AG04449 (cell line): ENCODE measurements at regions of chr10 and their contacts with region 1.

Region 1: DNA sequence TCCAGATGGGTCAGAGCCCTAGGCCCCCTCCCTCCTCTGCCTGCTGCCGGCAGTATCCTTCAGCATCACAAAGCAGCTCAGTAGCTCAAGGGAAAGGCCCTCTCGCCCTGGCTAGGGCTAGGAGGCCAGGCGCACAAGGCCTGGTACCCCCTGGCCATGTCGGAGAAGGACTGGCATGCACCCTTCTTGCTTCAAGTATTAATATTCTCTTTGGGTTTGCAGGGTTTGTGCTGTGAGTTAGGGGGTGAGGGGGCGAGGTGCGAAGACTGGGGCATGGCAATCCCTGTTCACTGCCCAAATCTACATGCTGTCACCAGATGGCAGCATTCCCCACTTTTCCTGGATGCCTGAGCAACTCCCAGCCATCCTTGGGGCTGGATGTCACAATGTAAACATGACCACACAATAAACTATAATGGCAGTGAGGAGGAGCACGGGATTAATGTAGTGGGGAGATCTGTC is 105.2 kb downstream of the NEURL1 start:
- DNase-seq: peak; percentile 28
- H3K4me3 ChIP-seq: no peak overlapping the region
- CTCF ChIP-seq: peak; percentile 75

Region 2: GRCh38 chr10:103576862-103577261 is 21.8 kb before region 1 on chr10:
- CTCF ChIA-PET with region 1: interaction called, 12 read pairs
- POLR2A ChIA-PET with region 1: no interaction called
- DNase-seq: no peak
- H3K4me3 ChIP-seq: no peak overlapping the region
- CTCF ChIP-seq: no peak

Region 3: GRCh38 chr10:103612462-103613365 is 14.0 kb after region 1 on chr10:
- CTCF ChIA-PET with region 1: interaction called, 32 read pairs
- POLR2A ChIA-PET with region 1: interaction called, 3 read pairs
- DNase-seq: peak; percentile 31
- H3K4me3 ChIP-seq: no peak overlapping the region
- CTCF ChIP-seq: no peak

Region 4: DNA sequence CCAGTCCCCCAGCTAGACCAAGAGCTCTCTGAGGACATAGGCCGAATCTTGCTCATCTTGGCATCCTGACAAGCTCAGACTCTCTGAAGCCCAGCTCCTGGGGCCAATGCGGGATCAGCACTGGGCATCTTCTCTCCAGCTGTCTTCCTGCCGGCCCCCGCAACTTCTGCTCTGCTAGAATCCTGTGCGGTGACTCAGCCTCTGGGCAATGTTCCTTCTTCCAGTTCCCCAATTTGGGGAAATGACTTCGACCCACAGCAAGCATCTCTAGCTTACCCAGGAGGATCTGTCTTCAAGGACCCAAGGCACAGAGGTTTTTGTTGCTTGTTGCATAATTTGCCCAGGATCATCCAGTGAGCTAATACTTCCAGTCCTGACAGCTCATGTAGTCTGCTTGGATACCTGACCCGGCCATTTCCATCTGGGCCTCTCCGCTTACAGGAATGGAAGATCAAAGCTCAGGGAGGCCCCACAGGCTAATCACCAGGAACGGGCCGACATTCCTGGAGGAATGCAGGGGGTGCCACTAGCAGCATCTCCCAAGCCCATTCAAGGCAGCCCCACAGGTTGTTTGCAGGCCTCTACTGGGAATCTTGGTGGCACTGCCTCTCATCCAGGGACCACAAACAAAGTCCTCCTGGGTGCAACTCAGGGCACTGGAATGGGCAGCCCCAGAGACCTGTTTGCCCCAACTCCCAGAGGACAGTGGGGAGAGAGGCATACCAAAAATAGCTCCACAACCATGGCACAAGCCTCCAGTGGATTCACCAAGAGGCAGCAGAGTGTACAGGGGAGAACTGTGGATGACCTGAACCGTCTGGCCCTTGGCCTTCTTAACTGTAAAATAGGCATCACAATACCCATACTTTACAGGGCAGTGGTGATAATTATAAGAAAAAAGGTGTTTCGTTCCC is 46.7 kb after region 1 on chr10:
- CTCF ChIA-PET with region 1: no interaction called
- POLR2A ChIA-PET with region 1: no interaction called
- DNase-seq: peak; percentile 91
- H3K4me3 ChIP-seq: no peak overlapping the region
- CTCF ChIP-seq: no peak

Region 5: DNA sequence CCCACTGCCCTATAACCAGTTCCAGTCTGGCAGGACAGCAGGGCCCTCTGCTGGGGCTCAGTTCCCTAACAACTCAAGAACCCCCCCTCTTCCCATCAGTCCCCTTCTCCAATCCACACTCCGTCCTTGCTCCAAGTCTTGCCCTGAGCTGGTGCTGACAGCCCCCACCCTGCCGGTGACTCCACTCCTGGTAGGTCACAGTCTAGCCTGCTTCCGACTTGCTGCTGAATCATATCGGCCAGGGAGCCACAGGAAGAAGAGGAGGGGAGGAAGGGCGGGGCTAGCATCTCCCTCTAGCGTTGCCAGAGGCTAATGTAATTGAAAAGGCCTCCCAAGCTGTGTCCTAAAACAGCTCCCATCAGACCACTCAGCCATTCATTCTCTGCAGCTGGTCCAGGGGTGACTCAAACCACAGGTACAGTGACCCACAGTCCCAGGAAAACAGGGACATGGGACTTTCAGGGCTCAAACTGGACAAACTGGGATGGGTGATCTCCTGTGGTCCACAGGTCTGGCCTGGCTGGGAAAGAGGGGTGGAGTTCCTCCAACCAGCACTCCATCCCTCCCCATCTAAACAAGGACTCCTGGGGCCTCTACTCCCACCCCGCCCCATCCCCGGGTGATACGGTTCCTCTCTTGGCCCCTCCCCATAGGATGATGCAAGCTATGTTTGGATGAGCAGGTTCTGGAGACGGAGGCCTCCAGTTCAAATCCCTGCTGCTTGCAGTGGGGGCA is 97.9 kb after region 1 on chr10:
- CTCF ChIA-PET with region 1: interaction called, 447 read pairs
- POLR2A ChIA-PET with region 1: no interaction called
- DNase-seq: peak; percentile 75
- H3K4me3 ChIP-seq: no peak overlapping the region
- CTCF ChIP-seq: peak; percentile 68